ENCODE measurements at regions of chr21 and their contacts with region 1.

Region 1: DNA sequence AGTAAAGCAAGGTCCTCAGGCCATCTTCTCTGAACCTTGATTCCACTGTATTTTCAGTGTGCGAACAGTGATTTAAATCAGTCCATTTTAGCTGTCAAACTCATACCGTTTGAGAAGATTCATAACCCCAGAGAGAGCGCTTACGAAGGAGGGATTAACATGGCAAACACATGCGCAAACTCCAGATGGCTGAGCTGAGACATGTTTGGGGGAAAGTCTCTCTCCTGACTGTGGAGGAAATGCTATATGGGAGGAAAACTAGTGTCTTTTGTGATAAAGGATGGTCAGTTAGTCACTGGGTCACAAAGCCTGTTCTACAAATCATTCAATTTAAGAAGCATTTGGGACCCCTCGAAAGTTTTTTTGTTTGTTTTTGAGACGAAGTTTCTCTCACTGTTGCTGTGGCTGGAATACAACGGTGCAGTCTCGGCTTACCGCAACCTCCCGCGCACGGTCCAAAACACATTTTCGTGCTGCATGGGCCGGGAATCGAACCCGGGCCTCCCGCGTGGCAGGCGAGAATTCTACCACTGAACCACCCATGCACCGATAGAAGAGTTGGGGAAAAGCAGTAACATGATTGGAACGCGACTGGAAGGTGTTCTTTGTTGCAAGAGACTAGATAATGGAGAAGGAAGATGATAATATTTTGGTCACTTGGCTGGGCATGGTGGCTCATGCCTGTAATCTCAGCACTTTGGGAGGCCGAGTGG is 58.4 kb upstream of the CXADR start:
- DNase-seq: peak; percentile 79 to 84
- H3K4me3 ChIP-seq: peak overlapping the region; percentile 56
- H3K27ac ChIP-seq: peak overlapping the region; percentile 47
- H3K4me1 ChIP-seq: peaks cover 16% of the 10 kb centered on the region
- H3K27me3 ChIP-seq: no peaks in the 10 kb centered on the region
- CTCF ChIP-seq: no peak

Region 2: GRCh38 chr21:15872236-15872635 is 1582.2 kb before region 1 on chr21:
- CTCF ChIA-PET with region 1: no interaction called
- POLR2A ChIA-PET with region 1: no interaction called
- intact Hi-C with region 1: no loop called
- DNase-seq: no peak
- H3K4me3 ChIP-seq: no peak overlapping the region
- H3K27ac ChIP-seq: no peak overlapping the region
- H3K4me1 ChIP-seq: peaks cover 8% of the 10 kb centered on the region
- H3K27me3 ChIP-seq: no peaks in the 10 kb centered on the region
- CTCF ChIP-seq: no peak

Region 3: GRCh38 chr21:17118638-17119384 is 335.7 kb before region 1 on chr21:
- CTCF ChIA-PET with region 1: no interaction called
- POLR2A ChIA-PET with region 1: no interaction called
- intact Hi-C with region 1: no loop called
- DNase-seq: no peak
- H3K4me3 ChIP-seq: no peak overlapping the region
- H3K27ac ChIP-seq: no peak overlapping the region
- H3K4me1 ChIP-seq: no peaks in the 10 kb centered on the region
- H3K27me3 ChIP-seq: no peaks in the 10 kb centered on the region
- CTCF ChIP-seq: no peak

Region 4: DNA sequence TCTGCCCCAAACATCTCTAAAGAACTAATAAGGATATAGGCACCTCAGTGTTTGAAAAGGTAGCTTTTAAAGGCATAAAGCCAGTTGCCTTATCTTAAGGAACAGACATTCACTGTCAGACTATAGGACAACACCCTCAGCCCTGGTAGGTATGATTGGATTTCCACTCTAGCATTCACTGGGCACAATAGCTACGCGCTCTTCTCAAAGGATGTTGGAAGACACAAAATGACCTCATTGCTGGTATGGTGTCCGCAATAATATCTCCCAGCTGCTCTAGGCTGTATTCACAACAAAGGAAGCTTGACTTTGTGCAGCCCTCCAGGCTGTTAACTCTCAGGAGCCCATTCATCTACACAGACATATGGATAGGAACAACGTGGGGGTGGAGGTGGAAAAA is 61.1 kb before region 1 on chr21:
- CTCF ChIA-PET with region 1: no interaction called
- POLR2A ChIA-PET with region 1: no interaction called
- intact Hi-C with region 1: loop called (anchors 5 kb)
- DNase-seq: no peak
- H3K4me3 ChIP-seq: no peak overlapping the region
- H3K27ac ChIP-seq: no peak overlapping the region
- H3K4me1 ChIP-seq: peaks cover 18% of the 10 kb centered on the region
- H3K27me3 ChIP-seq: no peaks in the 10 kb centered on the region
- CTCF ChIP-seq: no peak

Region 5: GRCh38 chr21:17414766-17415165 is 39.7 kb before region 1 on chr21:
- CTCF ChIA-PET with region 1: no interaction called
- POLR2A ChIA-PET with region 1: no interaction called
- intact Hi-C with region 1: loop called (anchors 5 kb)
- DNase-seq: no peak
- H3K4me3 ChIP-seq: no peak overlapping the region
- H3K27ac ChIP-seq: no peak overlapping the region
- H3K4me1 ChIP-seq: peaks cover 15% of the 10 kb centered on the region
- H3K27me3 ChIP-seq: no peaks in the 10 kb centered on the region
- CTCF ChIP-seq: no peak

Region 6: DNA sequence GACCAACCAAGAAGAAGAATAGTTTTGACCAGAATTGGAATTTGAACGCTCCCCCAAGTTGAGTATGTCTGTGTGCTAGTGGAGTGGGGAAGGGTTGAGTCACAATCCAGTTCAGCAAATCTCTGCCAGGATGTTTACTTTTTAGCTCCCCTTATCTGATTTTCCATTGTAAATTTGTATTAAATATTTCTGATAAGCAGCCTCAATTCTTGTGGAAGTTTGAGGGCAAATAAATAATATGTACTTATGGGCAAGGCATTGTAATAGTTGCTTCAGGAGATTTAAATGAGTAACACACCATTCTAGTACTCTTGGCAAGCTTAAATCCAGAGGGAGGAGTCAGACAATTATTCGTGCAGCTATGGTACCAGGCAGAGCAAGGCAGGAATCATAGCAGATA is 72.8 kb after region 1 on chr21:
- CTCF ChIA-PET with region 1: no interaction called
- POLR2A ChIA-PET with region 1: no interaction called
- intact Hi-C with region 1: no loop called
- DNase-seq: peak; percentile 34 to 96
- H3K4me3 ChIP-seq: no peak overlapping the region
- H3K27ac ChIP-seq: peak overlapping the region; percentile 48
- H3K4me1 ChIP-seq: peaks cover 61% of the 10 kb centered on the region
- H3K27me3 ChIP-seq: no peaks in the 10 kb centered on the region
- CTCF ChIP-seq: no peak

Region 7: GRCh38 chr21:17575076-17575475 is 120.6 kb after region 1 on chr21:
- CTCF ChIA-PET with region 1: no interaction called
- POLR2A ChIA-PET with region 1: interaction called, 11 read pairs
- intact Hi-C with region 1: no loop called
- DNase-seq: no peak
- H3K4me3 ChIP-seq: no peak overlapping the region
- H3K27ac ChIP-seq: no peak overlapping the region
- H3K4me1 ChIP-seq: peaks cover 11% of the 10 kb centered on the region; the same call in 1 of the 2 replicates
- H3K27me3 ChIP-seq: no peaks in the 10 kb centered on the region
- CTCF ChIP-seq: no peak

Region 8: DNA sequence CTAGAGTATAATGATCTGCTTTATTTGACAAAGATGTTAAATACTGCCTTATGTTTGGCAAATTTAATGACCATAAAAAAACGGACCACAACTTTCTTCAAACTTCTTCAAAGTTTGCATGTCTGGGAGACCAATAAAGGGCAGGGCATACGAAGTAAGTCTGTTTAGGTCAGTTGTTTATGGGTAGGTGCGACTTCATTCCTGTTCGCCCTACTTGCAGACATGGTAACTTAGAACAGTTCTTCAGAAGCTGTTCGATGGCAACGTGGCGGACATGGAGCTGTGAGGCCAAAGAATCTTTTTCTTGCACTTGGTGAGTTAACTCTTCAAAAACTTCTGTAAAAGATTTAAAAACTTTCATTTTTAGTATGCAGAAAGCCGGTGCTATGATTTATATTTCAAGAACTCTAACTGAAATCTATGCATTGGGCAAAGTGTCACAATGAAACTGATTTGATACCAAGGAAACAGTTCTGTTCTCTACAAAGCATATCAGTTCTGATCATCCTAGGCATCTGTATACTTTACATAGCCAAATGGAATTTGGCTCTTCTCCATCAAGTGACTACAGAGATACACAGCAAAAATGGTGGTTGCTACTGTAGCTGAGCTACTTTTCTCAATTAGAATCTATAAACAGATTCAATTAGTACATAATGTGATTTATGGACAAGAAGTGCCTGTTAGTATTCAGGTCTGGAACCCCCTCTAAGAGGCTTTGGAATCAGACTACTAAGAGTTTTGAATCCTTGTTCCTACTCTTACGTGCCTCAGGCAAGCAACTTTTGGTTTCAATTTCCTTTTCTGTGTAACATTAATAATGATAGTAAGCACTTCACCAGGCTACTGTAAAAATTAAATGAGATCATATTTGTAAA is 339.0 kb after region 1 on chr21:
- CTCF ChIA-PET with region 1: no interaction called
- POLR2A ChIA-PET with region 1: no interaction called
- intact Hi-C with region 1: no loop called
- DNase-seq: no peak
- H3K4me3 ChIP-seq: no peak overlapping the region
- H3K27ac ChIP-seq: no peak overlapping the region
- H3K4me1 ChIP-seq: no peaks in the 10 kb centered on the region; the same call in 1 of the 2 replicates
- H3K27me3 ChIP-seq: no peaks in the 10 kb centered on the region
- CTCF ChIP-seq: no peak